A673 (cell line): ENCODE measurements at regions of chr1 and their contacts with region 1.

Region 1: GRCh38 chr1:168439456-168440375 is 104.1 kb downstream of the XCL2 start:
- DNase-seq: peak; percentile 93
- H3K4me3 ChIP-seq: no peak overlapping the region
- H3K27ac ChIP-seq: no peak overlapping the region
- H3K4me1 ChIP-seq: no peaks in the 10 kb centered on the region
- H3K27me3 ChIP-seq: no peaks in the 10 kb centered on the region
- CTCF ChIP-seq: peak; percentile 91

Region 2: GRCh38 chr1:168342572-168343280 is 97.0 kb before region 1 on chr1:
- CTCF ChIA-PET with region 1: interaction called, 10 read pairs
- POLR2A ChIA-PET with region 1: no interaction called
- intact Hi-C with region 1: no loop called
- DNase-seq: peak; percentile 88
- H3K4me3 ChIP-seq: peak overlapping the region; percentile 29
- H3K27ac ChIP-seq: no peak overlapping the region
- H3K4me1 ChIP-seq: no peaks in the 10 kb centered on the region
- H3K27me3 ChIP-seq: no peaks in the 10 kb centered on the region
- CTCF ChIP-seq: peak; percentile 73

Region 3: DNA sequence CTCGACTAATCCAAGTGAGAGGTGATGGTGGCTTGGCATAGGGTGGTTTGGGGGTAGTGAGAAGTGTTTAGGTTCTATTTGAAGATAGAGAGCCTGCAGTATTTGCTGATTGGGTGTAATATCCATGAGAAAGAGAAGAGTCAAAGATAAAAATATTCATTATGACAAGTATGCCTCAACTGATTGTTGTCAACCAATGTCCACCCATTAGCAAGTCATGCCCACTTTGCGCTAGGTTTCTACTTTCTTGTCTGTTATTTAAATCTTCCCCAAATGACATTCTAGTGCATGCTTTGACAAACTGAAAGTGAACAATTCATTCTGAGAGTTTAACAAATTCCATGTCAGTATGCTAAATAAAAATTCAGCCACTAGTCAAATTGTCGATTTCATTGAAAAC is 132.9 kb after region 1 on chr1:
- CTCF ChIA-PET with region 1: interaction called, 9 read pairs
- POLR2A ChIA-PET with region 1: no interaction called
- intact Hi-C with region 1: loop called (anchors 2 kb)
- DNase-seq: no peak
- H3K4me3 ChIP-seq: no peak overlapping the region
- H3K27ac ChIP-seq: no peak overlapping the region
- H3K4me1 ChIP-seq: no peaks in the 10 kb centered on the region
- H3K27me3 ChIP-seq: no peaks in the 10 kb centered on the region
- CTCF ChIP-seq: no peak